Breast epithelium (tissue), 4 donors: ENCODE measurements at regions of chr9 and their contacts with region 1.

Region 1: GRCh38 chr9:117305454-117305853 is 109.4 kb downstream of the ASTN2 start:
- DNase-seq: no peak
- H3K4me3 ChIP-seq: no peak overlapping the region
- H3K27ac ChIP-seq: no peak overlapping the region
- H3K4me1 ChIP-seq: no peaks in the 10 kb centered on the region
- H3K27me3 ChIP-seq: no peaks in the 10 kb centered on the region
- CTCF ChIP-seq: no peak
- POLR2A ChIP-seq: no peak

Region 2: DNA sequence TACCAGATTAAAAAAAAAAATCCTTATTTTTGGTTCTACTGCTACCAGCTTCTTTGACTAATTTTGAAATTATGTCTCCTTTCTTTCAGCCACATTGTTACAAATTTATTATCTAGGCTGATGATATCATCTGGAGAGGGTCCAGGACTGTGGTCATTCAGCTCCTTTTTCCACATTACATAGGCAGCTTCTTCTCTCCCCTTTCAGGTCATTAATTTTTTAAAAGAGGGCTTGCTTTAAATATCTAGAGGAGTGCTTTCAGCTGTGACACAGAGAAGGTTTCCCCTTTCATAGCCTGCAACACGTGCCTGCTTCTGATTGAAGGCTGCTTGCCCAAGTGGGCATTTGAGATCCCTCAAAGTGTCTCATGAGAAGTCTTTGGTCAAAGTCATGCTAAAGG is 1307.5 kb before region 1 on chr9:
- intact Hi-C with region 1: loop called (anchors 10 kb)
- DNase-seq: no peak
- H3K4me3 ChIP-seq: no peak overlapping the region
- H3K27ac ChIP-seq: no peak overlapping the region
- H3K4me1 ChIP-seq: no peaks in the 10 kb centered on the region
- H3K27me3 ChIP-seq: no peaks in the 10 kb centered on the region
- CTCF ChIP-seq: no peak
- POLR2A ChIP-seq: no peak

Region 3: GRCh38 chr9:116842658-116843057 is 462.8 kb before region 1 on chr9:
- intact Hi-C with region 1: no loop called
- DNase-seq: no peak
- H3K4me3 ChIP-seq: no peak overlapping the region
- H3K27ac ChIP-seq: no peak overlapping the region
- H3K4me1 ChIP-seq: no peaks in the 10 kb centered on the region
- H3K27me3 ChIP-seq: no peaks in the 10 kb centered on the region
- CTCF ChIP-seq: no peak
- POLR2A ChIP-seq: no peak

Region 4: DNA sequence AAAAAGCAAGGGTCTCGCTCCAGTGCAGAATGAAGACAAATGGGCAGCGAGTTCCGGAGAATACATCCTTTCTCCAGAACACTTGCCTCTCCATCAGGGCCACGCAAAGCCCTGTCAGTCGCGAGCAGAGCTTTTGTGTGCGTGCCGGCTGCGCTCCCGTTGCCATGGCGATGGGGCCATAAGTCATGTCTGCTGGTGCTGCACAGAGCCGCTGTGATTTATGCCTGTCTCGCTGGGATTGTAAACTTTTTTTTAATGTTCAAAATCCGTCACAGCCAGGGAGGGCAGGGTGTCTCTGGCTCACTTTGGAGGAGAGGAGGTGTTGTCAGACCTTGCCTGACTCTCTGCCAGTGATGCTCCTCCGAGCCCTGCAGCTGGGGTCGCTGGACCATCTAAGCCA is 345.6 kb before region 1 on chr9:
- intact Hi-C with region 1: no loop called
- DNase-seq: no peak
- H3K4me3 ChIP-seq: no peak overlapping the region
- H3K27ac ChIP-seq: no peak overlapping the region
- H3K4me1 ChIP-seq: no peaks in the 10 kb centered on the region
- H3K27me3 ChIP-seq: no peaks in the 10 kb centered on the region
- CTCF ChIP-seq: no peak
- POLR2A ChIP-seq: no peak

Region 5: GRCh38 chr9:117153021-117153420 is 152.4 kb before region 1 on chr9:
- intact Hi-C with region 1: loop called (anchors 5 kb)
- DNase-seq: no peak
- H3K4me3 ChIP-seq: no peak overlapping the region
- H3K27ac ChIP-seq: no peak overlapping the region
- H3K4me1 ChIP-seq: no peaks in the 10 kb centered on the region
- H3K27me3 ChIP-seq: no peaks in the 10 kb centered on the region
- CTCF ChIP-seq: no peak
- POLR2A ChIP-seq: no peak